Aorta (tissue), 5 donors: ENCODE measurements at regions of chr1 and their contacts with region 1.

Region 1: GRCh38 chr1:203692565-203693470 is 66.2 kb downstream of the ATP2B4 start:
- DNase-seq: peak; percentile 91 to 93
- ATAC-seq: peak; percentile 91
- H3K4me3 ChIP-seq: no peak overlapping the region
- H3K27ac ChIP-seq: peak overlapping the region; percentile 58 to 69
- H3K4me1 ChIP-seq: peaks cover 0 to 4% of the 10 kb centered on the region in 2 donors
- H3K27me3 ChIP-seq: no peaks in the 10 kb centered on the region

Region 2: DNA sequence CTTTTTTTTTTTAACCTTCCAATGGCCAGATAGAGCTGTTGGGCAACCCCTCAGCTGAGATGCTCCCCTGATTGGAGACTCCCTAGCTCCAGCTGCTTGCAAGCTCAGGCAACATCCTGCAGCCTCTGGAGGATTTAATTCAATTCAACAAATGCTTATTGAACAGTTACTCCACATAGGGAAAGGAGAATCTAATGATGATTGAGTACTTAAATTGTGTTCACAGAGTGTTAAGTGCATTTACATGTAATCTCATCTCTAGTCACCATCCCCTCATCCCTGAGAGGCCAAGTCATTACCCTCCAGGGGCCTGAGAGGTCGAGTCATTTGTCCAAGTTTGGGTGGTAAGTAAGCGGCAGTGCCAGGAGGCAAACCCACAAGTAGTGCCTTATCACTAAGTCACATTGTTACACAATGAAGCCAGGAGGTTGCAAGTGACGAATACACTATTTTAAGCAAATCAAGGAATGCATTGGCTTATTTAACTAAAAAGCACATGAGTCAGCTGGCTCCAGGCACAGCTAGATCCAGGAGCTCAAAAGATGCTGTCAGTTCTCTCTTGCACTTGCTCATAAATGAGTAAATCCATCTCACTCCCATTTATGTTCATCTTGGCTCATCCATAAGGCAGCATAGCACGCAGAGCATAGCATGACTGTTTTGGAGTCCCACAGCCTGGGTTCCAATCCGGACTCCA is 134.6 kb before region 1 on chr1:
- intact Hi-C with region 1: loop called in 1 of 2 experiments (anchors 2 kb)
- DNase-seq: peak; percentile 85 to 89
- ATAC-seq: peak; percentile 83
- H3K4me3 ChIP-seq: no peak overlapping the region
- H3K27ac ChIP-seq: peak overlapping the region; percentile 99
- H3K4me1 ChIP-seq: peaks cover 3 to 4% of the 10 kb centered on the region in 2 donors
- H3K27me3 ChIP-seq: no peaks in the 10 kb centered on the region

Region 3: GRCh38 chr1:203673550-203674427 is 19.0 kb before region 1 on chr1:
- intact Hi-C with region 1: loop called (anchors 1 to 2 kb)
- DNase-seq: peak; percentile 66 to 80
- ATAC-seq: peak; percentile 79
- H3K4me3 ChIP-seq: no peak overlapping the region
- H3K27ac ChIP-seq: peak overlapping the region; percentile 61 to 98
- H3K4me1 ChIP-seq: peaks cover 2 to 6% of the 10 kb centered on the region in 2 donors
- H3K27me3 ChIP-seq: no peaks in the 10 kb centered on the region